Left cardiac atrium (tissue), 4 donors: ENCODE measurements at regions of chr10 and their contacts with region 1.

Region 1: GRCh38 chr10:97759158-97759887 is 12.5 kb downstream of the SFRP5 start:
- DNase-seq: peak; percentile 77
- ATAC-seq: peak; percentile 67 to 76

Region 2: DNA sequence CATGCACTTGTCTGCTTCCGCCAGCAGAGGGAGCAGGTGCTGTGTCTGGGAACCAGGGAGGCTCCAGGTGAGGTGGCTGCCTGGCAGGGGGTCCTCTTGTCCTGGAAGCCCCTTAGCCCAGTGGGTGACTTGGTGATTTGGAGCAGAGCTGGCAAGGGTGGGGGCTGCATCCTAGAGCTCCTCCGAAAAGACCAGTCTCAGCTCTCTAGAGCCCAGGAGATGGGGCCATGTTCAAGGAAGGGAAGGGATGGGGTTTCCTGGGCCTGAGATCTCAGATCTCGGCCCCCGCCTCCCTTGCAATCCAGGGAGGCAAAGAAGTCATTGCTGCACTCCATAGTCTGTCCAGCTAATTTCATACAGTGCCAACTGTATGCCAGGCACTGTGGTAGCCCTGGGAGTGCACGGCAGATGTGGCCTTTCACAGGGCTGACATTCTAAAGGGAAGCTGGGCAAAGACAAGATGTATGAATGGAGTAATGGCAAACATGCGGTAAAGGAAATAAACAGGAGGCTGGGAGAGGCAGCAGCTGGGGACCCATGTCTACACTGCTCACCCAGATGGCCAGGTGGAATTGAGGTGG is 32.9 kb after region 1 on chr10:
- intact Hi-C with region 1: loop called in 1 of 2 experiments (anchors 5 kb)
- DNase-seq: peak; percentile 68
- ATAC-seq: peak; percentile 25 to 45

Region 3: GRCh38 chr10:97869091-97870042 is 110.0 kb after region 1 on chr10:
- intact Hi-C with region 1: loop called (anchors 2 to 10 kb)
- DNase-seq: peak; percentile 89
- ATAC-seq: peak; percentile 94 to 96